ENCODE measurements at regions of chr3 and their contacts with region 1.

Region 1: GRCh38 chr3:11300970-11301369 is 28.8 kb downstream of the ATG7 start:
- DNase-seq: peak; percentile 46
- ATAC-seq: peak; percentile 98
- H3K4me3 ChIP-seq: no peak overlapping the region
- H3K27ac ChIP-seq: peak overlapping the region; percentile 60
- H3K4me1 ChIP-seq: peaks cover 3% of the 10 kb centered on the region; the same call in 1 of the 2 replicates
- H3K27me3 ChIP-seq: no peaks in the 10 kb centered on the region
- CTCF ChIP-seq: no peak
- EP300 ChIP-seq: no peak
- POLR2A ChIP-seq: no peak
- RAD21 ChIP-seq: no peak

Region 2: DNA sequence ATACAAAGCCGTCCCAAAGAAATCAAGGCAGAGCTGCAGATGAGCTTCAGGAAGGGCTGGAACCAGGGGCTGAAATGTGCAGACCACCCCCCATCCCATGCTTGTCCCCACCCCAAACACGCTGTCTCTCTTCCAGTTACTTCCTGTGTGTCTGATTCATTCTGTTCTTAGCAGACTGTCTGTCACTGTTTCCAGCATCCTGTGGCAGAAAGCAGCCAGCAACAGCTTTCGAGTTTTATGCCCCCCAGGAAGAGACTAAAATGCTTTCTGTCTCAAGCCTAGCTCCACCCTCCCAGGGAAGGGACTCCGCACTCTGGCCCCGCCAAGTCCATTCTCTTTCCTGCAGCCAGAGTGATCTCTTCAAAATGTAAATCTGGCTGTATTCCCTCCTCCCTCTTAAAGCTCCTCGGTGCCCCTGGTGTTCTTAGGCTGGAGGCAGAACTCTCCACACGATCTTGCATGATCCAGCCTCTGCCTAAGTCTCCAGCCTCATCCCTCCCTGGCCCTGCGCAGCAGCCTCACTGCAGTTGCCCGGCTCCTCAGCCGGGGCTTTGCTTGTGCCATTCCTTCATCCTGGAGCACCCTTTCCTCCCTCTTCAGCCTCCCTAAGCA is 105.1 kb before region 1 on chr3:
- CTCF ChIA-PET with region 1: no interaction called
- POLR2A ChIA-PET with region 1: no interaction called
- RAD21 ChIA-PET with region 1: no interaction called
- SMC1A ChIA-PET with region 1: no interaction called
- in situ Hi-C with region 1: no loop called
- intact Hi-C with region 1: no loop called
- DNase-seq: no peak
- ATAC-seq: no peak
- H3K4me3 ChIP-seq: no peak overlapping the region
- H3K27ac ChIP-seq: no peak overlapping the region
- H3K4me1 ChIP-seq: no peaks in the 10 kb centered on the region
- H3K27me3 ChIP-seq: no peaks in the 10 kb centered on the region; a peak in 2 of 4 replicates
- CTCF ChIP-seq: no peak
- EP300 ChIP-seq: no peak
- POLR2A ChIP-seq: no peak
- RAD21 ChIP-seq: no peak

Region 3: GRCh38 chr3:11211531-11212298 is 89.3 kb before region 1 on chr3:
- CTCF ChIA-PET with region 1: no interaction called
- POLR2A ChIA-PET with region 1: no interaction called
- RAD21 ChIA-PET with region 1: no interaction called
- SMC1A ChIA-PET with region 1: no interaction called
- in situ Hi-C with region 1: no loop called
- intact Hi-C with region 1: no loop called
- DNase-seq: no peak
- ATAC-seq: no peak
- H3K4me3 ChIP-seq: no peak overlapping the region
- H3K27ac ChIP-seq: no peak overlapping the region
- H3K4me1 ChIP-seq: no peaks in the 10 kb centered on the region
- H3K27me3 ChIP-seq: peaks cover 0 to 5% of the 10 kb centered on the region in 2 experiments; a peak in 2 of 4 replicates
- CTCF ChIP-seq: no peak
- EP300 ChIP-seq: no peak
- POLR2A ChIP-seq: no peak
- RAD21 ChIP-seq: no peak

Region 4: GRCh38 chr3:11271986-11272904 is 28.7 kb before region 1 on chr3 and contains the start of gene ATG7:
- CTCF ChIA-PET with region 1: interaction called, 3 read pairs
- POLR2A ChIA-PET with region 1: interaction called, 7 read pairs
- RAD21 ChIA-PET with region 1: no interaction called
- SMC1A ChIA-PET with region 1: interaction called, 12 read pairs
- in situ Hi-C with region 1: no loop called
- intact Hi-C with region 1: no loop called
- DNase-seq: peak; percentile 82
- ATAC-seq: peak; percentile 99
- H3K4me3 ChIP-seq: peak within 1 kb of the TSS; percentile 99
- H3K27ac ChIP-seq: peak within 1 kb of the TSS; percentile 88
- H3K4me1 ChIP-seq: peaks cover 7% of the 10 kb centered on the region
- H3K27me3 ChIP-seq: no peaks in the 10 kb centered on the region
- CTCF ChIP-seq: no peak
- EP300 ChIP-seq: no peak
- POLR2A ChIP-seq: peak; percentile 95
- RAD21 ChIP-seq: no peak
- polyA plus RNA-seq, gene ATG7: 13.5 to 18.0 TPM

Region 5: GRCh38 chr3:11350374-11350773 is 49.4 kb after region 1 on chr3:
- CTCF ChIA-PET with region 1: no interaction called
- POLR2A ChIA-PET with region 1: no interaction called
- RAD21 ChIA-PET with region 1: no interaction called
- SMC1A ChIA-PET with region 1: no interaction called
- in situ Hi-C with region 1: no loop called
- intact Hi-C with region 1: no loop called
- DNase-seq: no peak
- ATAC-seq: no peak
- H3K4me3 ChIP-seq: no peak overlapping the region
- H3K27ac ChIP-seq: no peak overlapping the region
- H3K4me1 ChIP-seq: no peaks in the 10 kb centered on the region
- H3K27me3 ChIP-seq: no peaks in the 10 kb centered on the region
- CTCF ChIP-seq: no peak
- EP300 ChIP-seq: no peak
- POLR2A ChIP-seq: no peak
- RAD21 ChIP-seq: no peak

Measured in GM12878 (cell line).